K562 (cell line): ENCODE measurements at regions of chr17 and their contacts with region 1.

Region 1: GRCh38 chr17:1055751-1056645 is 59.1 kb downstream of the TIMM22 start:
- DNase-seq: peak; percentile 67 to 71 (median 71)
- ATAC-seq: peak; percentile 95
- H3K4me3 ChIP-seq: no peak overlapping the region
- H3K27ac ChIP-seq: no peak overlapping the region
- H3K4me1 ChIP-seq: peaks cover 0 to 2% of the 10 kb centered on the region in 2 experiments; a peak in 2 of 5 replicates
- H3K27me3 ChIP-seq: peaks cover 0 to 21% of the 10 kb centered on the region in 2 experiments; a peak in 2 of 5 replicates
- CTCF ChIP-seq: peak; percentile 64 to 74 (median 71)
- EP300 ChIP-seq: no peak
- POLR2A ChIP-seq: no peak
- RAD21 ChIP-seq: peak; percentile 51 to 72

Region 2: DNA sequence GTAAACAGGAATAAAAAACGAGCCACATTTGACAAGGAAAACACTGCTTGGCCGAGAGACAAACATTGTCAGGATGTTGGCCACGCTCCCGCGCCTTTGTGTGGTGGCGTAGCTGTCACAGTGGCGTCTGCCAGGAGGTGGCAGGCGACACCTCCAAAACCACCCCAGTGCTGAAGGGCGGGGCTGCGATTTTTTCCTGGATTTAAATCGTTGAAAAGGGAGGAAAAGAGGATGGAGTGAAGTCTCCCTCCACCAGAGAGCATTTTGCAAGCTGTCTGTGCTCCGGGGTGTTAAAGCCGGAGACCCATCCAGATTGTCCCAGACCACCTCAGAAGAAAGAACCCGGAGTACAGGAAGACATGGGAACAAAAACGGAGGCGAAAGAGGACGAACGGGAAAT is 261.1 kb before region 1 on chr17:
- CTCF ChIA-PET with region 1: interaction called, 14 read pairs
- POLR2A ChIA-PET with region 1: no interaction called
- in situ Hi-C with region 1: loop called (anchors 5 kb)
- intact Hi-C with region 1: no loop called
- DNase-seq: peak; percentile 54 to 65 (median 61)
- ATAC-seq: peak; percentile 93
- H3K4me3 ChIP-seq: no peak overlapping the region
- H3K27ac ChIP-seq: no peak overlapping the region
- H3K4me1 ChIP-seq: peaks cover 0 to 3% of the 10 kb centered on the region in 2 experiments; a peak in 1 of 5 replicates
- H3K27me3 ChIP-seq: peaks cover 6 to 20% of the 10 kb centered on the region in 2 experiments; a peak in 4 of 5 replicates
- CTCF ChIP-seq: peak; percentile 76 to 81 (median 77)
- EP300 ChIP-seq: no peak
- POLR2A ChIP-seq: no peak
- RAD21 ChIP-seq: peak; percentile 68 to 85

Region 3: GRCh38 chr17:1031711-1032110 is 24.3 kb before region 1 on chr17:
- CTCF ChIA-PET with region 1: no interaction called
- POLR2A ChIA-PET with region 1: no interaction called
- in situ Hi-C with region 1: no loop called
- intact Hi-C with region 1: no loop called
- DNase-seq: peak in 2 of 4 experiments; percentile 19 to 28
- ATAC-seq: no peak
- H3K4me3 ChIP-seq: no peak overlapping the region
- H3K27ac ChIP-seq: no peak overlapping the region
- H3K4me1 ChIP-seq: peaks cover 0 to 4% of the 10 kb centered on the region in 2 experiments; a peak in 2 of 5 replicates
- H3K27me3 ChIP-seq: peaks cover 0 to 64% of the 10 kb centered on the region in 2 experiments; a peak in 4 of 5 replicates
- CTCF ChIP-seq: no peak
- EP300 ChIP-seq: no peak
- POLR2A ChIP-seq: no peak
- RAD21 ChIP-seq: no peak